B cell (primary cell): ENCODE measurements at regions of chr7 and their contacts with region 1.

Region 1: DNA sequence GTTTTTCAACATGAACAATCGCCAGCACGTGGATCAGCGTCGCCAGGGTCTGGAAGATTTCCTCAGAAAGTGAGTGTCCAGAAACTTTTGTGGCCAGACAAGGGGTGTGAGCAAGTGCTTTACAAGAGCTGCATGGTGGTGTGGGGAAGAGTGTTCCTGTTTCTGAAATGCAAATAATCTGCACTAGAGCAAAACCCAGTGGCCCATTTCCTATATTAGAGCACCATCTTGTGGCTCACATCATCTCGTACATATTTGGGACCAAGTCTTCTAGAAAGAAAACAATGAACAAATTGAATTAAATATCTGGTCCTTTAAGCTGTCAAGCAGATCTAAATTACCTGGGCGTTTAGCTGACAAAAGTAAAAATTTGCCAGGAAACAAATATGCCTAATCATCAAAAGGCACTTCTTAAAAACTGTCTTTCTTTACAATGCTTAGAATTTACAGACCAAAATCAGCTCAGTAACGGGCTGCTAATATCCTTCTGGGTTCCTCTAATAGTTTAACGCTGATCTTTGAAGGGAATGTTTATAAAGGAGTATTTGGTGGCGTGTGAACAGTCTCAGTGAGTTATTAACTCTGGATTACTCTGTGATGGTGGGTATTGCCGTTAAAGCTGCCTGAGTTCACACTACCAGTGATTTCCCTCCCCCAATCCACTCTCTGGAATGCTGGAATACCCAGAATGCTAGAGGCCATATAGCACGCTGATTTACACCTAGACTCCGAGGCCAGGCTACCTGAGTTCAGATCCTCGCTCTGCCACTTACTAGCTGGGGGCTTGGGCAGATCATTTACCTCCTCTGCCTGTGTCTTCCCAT is 73.6 kb downstream of the SNX10 start:
- DNase-seq: peak; percentile 89
- ATAC-seq: peak; percentile 95
- H3K4me3 ChIP-seq: no peak overlapping the region
- H3K4me3 Mint-ChIP-seq: no peak overlapping the region
- H3K27ac ChIP-seq: no peak overlapping the region
- H3K27ac Mint-ChIP-seq: peak overlapping the region; percentile 84
- H3K4me1 ChIP-seq: peaks cover 32 to 33% of the 10 kb centered on the region in 2 donors
- H3K4me1 Mint-ChIP-seq: peaks cover 34% of the 10 kb centered on the region
- H3K27me3 ChIP-seq: no peaks in the 10 kb centered on the region
- H3K27me3 Mint-ChIP-seq: no peaks in the 10 kb centered on the region
- CTCF ChIP-seq: peak; percentile 85

Region 2: GRCh38 chr7:25894902-25895791 is 470.1 kb before region 1 on chr7:
- CTCF ChIA-PET with region 1: interaction called, 158 read pairs
- POLR2A ChIA-PET with region 1: no interaction called
- intact Hi-C with region 1: loop called (anchors 1 kb)
- DNase-seq: peak; percentile 89
- ATAC-seq: peak; percentile 83
- H3K4me3 ChIP-seq: peak overlapping the region in 3 of 5 experiments; percentile 12 to 27 (median 19)
- H3K4me3 Mint-ChIP-seq: peak overlapping the region; percentile 75
- H3K27ac ChIP-seq: no peak overlapping the region
- H3K27ac Mint-ChIP-seq: peak overlapping the region; percentile 52
- H3K4me1 ChIP-seq: peaks cover 29 to 33% of the 10 kb centered on the region in 2 donors
- H3K4me1 Mint-ChIP-seq: peaks cover 31% of the 10 kb centered on the region
- H3K27me3 ChIP-seq: peaks cover 0 to 56% (median 43%) of the 10 kb centered on the region in 4 experiments
- H3K27me3 Mint-ChIP-seq: peaks cover 63% of the 10 kb centered on the region
- CTCF ChIP-seq: peak; percentile 91

Region 3: DNA sequence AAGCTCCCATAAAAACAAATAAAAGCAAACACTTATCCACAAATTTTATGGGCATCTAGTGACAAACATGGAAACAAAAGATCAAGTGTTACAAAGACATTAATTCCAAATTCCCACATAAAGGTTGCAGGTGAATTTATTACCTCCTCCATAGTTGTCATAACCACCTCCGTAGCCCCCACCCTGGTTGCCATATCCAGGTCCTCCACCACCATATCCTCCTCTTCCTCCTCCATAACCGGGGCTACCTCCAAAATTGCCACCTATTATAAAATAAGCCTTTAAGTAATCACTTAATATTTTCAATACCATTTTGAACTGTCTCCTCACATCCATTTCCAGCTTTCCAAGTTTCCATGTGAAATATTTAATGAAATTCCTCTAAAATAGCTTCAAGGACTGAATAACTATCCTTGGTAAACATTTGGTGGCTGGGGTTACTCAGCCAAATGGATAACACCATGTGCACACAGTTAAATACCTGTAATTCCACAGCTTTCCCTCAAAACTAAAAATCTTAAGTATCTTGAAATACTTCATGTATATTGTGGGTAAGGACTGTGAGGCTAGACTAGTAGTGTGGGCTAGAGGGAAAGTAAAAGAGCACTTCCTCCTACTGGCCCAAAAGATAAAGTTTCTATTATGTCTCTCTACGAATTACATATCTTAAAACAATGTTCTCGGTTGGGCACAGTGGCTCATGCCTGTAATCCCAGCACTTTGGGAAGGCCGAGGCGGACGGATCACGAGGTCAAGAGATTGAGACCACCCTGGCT is 171.7 kb before region 1 on chr7:
- CTCF ChIA-PET with region 1: interaction called, 84 read pairs
- POLR2A ChIA-PET with region 1: no interaction called
- intact Hi-C with region 1: loop called (anchors 1 kb)
- DNase-seq: peak; percentile 37
- ATAC-seq: no peak
- H3K4me3 ChIP-seq: no peak overlapping the region
- H3K4me3 Mint-ChIP-seq: peak overlapping the region; percentile 59
- H3K27ac ChIP-seq: peak overlapping the region in 1 of 2 donors; percentile 31
- H3K27ac Mint-ChIP-seq: peak overlapping the region; percentile 83
- H3K4me1 ChIP-seq: peaks cover 59 to 62% of the 10 kb centered on the region in 2 donors
- H3K4me1 Mint-ChIP-seq: peaks cover 84% of the 10 kb centered on the region
- H3K27me3 ChIP-seq: no peaks in the 10 kb centered on the region
- H3K27me3 Mint-ChIP-seq: no peaks in the 10 kb centered on the region
- CTCF ChIP-seq: no peak

Region 4: GRCh38 chr7:26305463-26306273 is 59.6 kb before region 1 on chr7:
- CTCF ChIA-PET with region 1: interaction called, 12 read pairs
- POLR2A ChIA-PET with region 1: no interaction called
- intact Hi-C with region 1: no loop called
- DNase-seq: peak; percentile 47
- ATAC-seq: peak; percentile 31
- H3K4me3 ChIP-seq: peak overlapping the region in 3 of 5 experiments; percentile 3 to 15 (median 6)
- H3K4me3 Mint-ChIP-seq: peak overlapping the region; percentile 53
- H3K27ac ChIP-seq: peak overlapping the region; percentile 69 to 86
- H3K27ac Mint-ChIP-seq: peak overlapping the region; percentile 81
- H3K4me1 ChIP-seq: peaks cover 17 to 43% of the 10 kb centered on the region in 2 donors
- H3K4me1 Mint-ChIP-seq: peaks cover 62% of the 10 kb centered on the region
- H3K27me3 ChIP-seq: no peaks in the 10 kb centered on the region
- H3K27me3 Mint-ChIP-seq: no peaks in the 10 kb centered on the region
- CTCF ChIP-seq: no peak

Region 5: DNA sequence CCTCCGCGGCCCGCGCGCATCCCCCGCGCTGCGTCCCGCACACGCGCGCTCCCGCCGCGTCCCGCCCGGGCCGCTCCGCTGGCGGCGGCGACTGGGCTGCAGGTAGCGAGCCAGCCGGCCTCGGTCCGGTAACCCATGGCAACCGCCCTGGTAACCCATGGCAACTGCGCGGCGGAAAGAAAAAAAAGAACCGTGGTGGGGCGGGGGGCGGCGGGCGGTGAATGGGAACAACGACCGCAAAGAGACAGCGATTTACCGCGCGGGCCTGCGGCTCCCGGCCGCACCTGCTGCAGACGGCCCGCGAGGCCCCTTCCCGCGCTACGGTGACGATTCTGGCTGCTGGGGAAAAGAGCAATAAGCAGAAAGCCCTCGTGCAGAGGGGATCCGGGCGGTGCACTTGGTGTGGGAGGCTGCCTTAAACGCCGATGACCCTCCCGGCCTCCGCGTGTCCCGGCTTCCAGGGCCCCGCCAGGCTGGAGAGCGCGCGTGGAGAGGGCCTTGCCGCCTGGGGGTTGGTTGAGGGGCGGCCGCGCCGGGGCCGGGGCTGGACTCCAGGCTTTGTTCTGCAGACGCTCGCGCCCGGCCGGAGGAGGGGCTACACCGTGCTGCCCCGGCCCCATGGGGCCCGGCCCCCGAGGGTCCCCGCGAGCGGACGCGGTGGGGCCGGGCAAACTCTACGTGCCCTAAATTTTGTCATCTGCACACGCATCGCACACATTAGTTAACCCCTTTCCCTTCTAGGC is 11.1 kb after region 1 on chr7:
- CTCF ChIA-PET with region 1: interaction called, 19 read pairs
- POLR2A ChIA-PET with region 1: no interaction called
- intact Hi-C with region 1: no loop called
- DNase-seq: peak; percentile 80
- ATAC-seq: peak; percentile 54
- H3K4me3 ChIP-seq: peak overlapping the region; percentile 34 to 69 (median 58)
- H3K4me3 Mint-ChIP-seq: peak overlapping the region; percentile 87
- H3K27ac ChIP-seq: no peak overlapping the region
- H3K27ac Mint-ChIP-seq: no peak overlapping the region
- H3K4me1 ChIP-seq: peaks cover 8 to 9% of the 10 kb centered on the region in 2 donors
- H3K4me1 Mint-ChIP-seq: peaks cover 6% of the 10 kb centered on the region
- H3K27me3 ChIP-seq: peaks cover 0 to 16% (median 2%) of the 10 kb centered on the region in 4 experiments
- H3K27me3 Mint-ChIP-seq: no peaks in the 10 kb centered on the region
- CTCF ChIP-seq: no peak

Region 6: DNA sequence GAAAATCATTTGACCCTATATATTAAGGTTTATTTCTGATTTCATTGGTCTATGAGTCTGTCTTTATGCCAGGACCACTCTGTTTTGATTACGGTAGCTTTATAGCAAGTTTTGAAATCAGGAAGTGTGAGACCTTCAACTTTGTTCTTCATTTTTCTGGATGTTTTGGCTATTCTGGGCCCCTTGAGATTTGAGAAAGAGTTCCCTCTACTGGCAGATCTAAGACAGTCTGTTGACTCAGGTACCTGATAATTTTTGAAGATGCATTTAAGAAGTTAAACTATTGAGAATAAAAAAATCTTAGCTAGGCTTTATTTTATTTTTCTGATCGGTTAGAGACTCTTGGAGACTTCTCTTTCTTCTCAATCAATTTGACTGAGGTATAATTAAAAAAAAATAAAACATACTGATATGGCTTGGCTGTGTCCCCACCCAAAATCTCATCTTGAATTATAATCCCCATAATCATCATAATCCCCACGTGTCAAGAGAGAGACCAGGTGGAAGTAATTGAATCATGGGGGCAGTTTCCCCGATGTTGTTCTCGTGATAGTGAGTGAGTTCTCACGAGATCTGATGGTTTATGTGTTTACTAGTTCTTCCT is 135.6 kb after region 1 on chr7:
- CTCF ChIA-PET with region 1: interaction called, 55 read pairs
- POLR2A ChIA-PET with region 1: no interaction called
- intact Hi-C with region 1: loop called (anchors 1 kb)
- DNase-seq: peak; percentile 70
- ATAC-seq: peak; percentile 70
- H3K4me3 ChIP-seq: no peak overlapping the region
- H3K4me3 Mint-ChIP-seq: no peak overlapping the region
- H3K27ac ChIP-seq: no peak overlapping the region
- H3K27ac Mint-ChIP-seq: no peak overlapping the region
- H3K4me1 ChIP-seq: no peaks in the 10 kb centered on the region
- H3K4me1 Mint-ChIP-seq: no peaks in the 10 kb centered on the region
- H3K27me3 ChIP-seq: peaks cover 0 to 6% (median 3%) of the 10 kb centered on the region in 4 experiments
- H3K27me3 Mint-ChIP-seq: peaks cover 33% of the 10 kb centered on the region
- CTCF ChIP-seq: peak; percentile 73

Region 7: DNA sequence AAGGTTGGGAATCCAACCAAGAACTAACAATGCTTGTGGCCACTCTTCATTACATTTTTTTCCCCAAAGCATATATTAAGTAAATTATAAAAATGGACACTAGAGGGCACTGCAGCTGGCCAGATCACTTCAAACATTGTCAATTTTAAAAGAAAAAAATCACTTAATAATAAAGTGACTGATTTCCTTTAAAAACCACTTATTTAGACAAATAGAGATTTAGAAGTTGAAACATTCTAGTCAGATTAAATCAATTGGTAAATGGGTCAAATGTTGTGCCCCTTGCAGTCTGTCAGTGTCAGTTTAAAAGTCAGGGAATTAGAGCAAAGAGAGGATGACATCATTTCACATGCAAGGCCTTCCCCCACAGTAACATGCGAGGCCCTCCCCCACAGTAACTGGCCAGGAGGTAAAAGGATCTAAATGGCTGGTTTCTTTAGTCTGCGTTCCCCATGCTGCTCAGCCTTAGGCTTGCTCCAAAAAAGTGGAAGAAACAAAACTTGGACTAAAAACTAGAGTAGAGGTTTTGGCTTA is 321.2 kb after region 1 on chr7:
- CTCF ChIA-PET with region 1: interaction called, 12 read pairs
- POLR2A ChIA-PET with region 1: no interaction called
- intact Hi-C with region 1: no loop called
- DNase-seq: peak; percentile 60
- ATAC-seq: no peak
- H3K4me3 ChIP-seq: no peak overlapping the region
- H3K4me3 Mint-ChIP-seq: no peak overlapping the region
- H3K27ac ChIP-seq: no peak overlapping the region
- H3K27ac Mint-ChIP-seq: no peak overlapping the region
- H3K4me1 ChIP-seq: peaks cover 7 to 14% of the 10 kb centered on the region in 2 donors
- H3K4me1 Mint-ChIP-seq: peaks cover 28% of the 10 kb centered on the region
- H3K27me3 ChIP-seq: no peaks in the 10 kb centered on the region
- H3K27me3 Mint-ChIP-seq: no peaks in the 10 kb centered on the region
- CTCF ChIP-seq: peak; percentile 87